Spleen (tissue), 13 donors: ENCODE measurements at regions of chr5 and their contacts with region 1.

Region 1: DNA sequence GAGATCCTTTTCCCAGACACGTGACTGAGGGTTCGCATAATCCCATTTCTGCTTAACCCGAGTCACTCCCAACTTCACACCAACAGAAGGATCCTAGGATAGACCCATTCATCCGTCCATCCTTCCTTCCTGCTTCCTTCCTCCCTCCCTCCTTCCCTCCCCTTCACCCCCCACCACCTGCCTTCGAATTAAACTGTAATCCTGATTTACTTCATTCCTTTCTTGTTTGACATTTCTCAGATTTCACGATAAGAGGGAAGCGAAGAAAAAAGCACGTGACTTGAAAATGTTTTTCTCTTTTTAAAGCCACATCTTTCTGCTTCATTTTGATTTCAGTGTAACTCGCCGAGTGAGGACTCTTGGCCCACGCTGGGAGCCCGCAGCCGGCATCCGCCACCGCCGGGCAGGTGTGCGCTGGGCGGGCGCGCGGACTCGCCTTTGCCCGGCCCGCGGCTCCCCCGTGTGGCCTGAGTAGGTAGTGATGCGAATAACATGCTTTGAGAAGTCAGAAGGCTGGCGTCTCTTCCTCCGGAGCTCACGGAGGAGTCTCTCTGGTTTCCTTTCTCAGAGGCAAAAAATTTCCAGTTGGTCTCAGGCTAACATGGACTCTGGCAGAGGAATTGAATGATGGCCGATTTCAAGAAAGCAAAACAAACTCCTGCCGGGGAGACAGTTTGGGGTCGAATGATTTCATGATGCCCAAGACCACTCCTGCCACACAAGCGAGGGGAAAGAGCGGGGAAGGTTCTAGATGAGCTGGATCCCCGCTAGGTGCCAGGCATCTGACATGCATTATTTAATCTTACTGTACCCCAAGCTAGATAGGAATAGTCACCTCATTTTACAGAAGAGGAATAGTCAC is 117.7 kb downstream of the SLC12A2 start:
- DNase-seq: peak; percentile 94
- H3K4me3 ChIP-seq: peak overlapping the region in 1 of 8 donors; percentile 50
- H3K27ac ChIP-seq: no peak overlapping the region
- H3K4me1 ChIP-seq: peaks cover 5 to 12% (median 8%) of the 10 kb centered on the region in 6 donors
- H3K27me3 ChIP-seq: peaks cover 0 to 4% (median 0%) of the 10 kb centered on the region in 7 donors
- CTCF ChIP-seq: peak; percentile 56 to 91 (median 82)
- POLR2A ChIP-seq: no peak

Region 2: GRCh38 chr5:127564002-127564769 is 637.1 kb before region 1 on chr5:
- intact Hi-C with region 1: loop called (anchors 5 kb)
- DNase-seq: no peak
- H3K4me3 ChIP-seq: no peak overlapping the region
- H3K27ac ChIP-seq: no peak overlapping the region
- H3K4me1 ChIP-seq: peaks cover 0 to 18% (median 0%) of the 10 kb centered on the region in 6 donors
- H3K27me3 ChIP-seq: peaks cover 0 to 4% (median 0%) of the 10 kb centered on the region in 7 donors
- CTCF ChIP-seq: peak; percentile 30 to 69 (median 61)
- POLR2A ChIP-seq: no peak

Region 3: GRCh38 chr5:127746756-127747155 is 454.5 kb before region 1 on chr5:
- intact Hi-C with region 1: loop called (anchors 10 kb)
- DNase-seq: no peak
- H3K4me3 ChIP-seq: no peak overlapping the region
- H3K27ac ChIP-seq: no peak overlapping the region
- H3K4me1 ChIP-seq: no peaks in the 10 kb centered on the region
- H3K27me3 ChIP-seq: no peaks in the 10 kb centered on the region
- CTCF ChIP-seq: peak in 6 of 11 experiments; percentile 12 to 30 (median 19)
- POLR2A ChIP-seq: no peak

Region 4: DNA sequence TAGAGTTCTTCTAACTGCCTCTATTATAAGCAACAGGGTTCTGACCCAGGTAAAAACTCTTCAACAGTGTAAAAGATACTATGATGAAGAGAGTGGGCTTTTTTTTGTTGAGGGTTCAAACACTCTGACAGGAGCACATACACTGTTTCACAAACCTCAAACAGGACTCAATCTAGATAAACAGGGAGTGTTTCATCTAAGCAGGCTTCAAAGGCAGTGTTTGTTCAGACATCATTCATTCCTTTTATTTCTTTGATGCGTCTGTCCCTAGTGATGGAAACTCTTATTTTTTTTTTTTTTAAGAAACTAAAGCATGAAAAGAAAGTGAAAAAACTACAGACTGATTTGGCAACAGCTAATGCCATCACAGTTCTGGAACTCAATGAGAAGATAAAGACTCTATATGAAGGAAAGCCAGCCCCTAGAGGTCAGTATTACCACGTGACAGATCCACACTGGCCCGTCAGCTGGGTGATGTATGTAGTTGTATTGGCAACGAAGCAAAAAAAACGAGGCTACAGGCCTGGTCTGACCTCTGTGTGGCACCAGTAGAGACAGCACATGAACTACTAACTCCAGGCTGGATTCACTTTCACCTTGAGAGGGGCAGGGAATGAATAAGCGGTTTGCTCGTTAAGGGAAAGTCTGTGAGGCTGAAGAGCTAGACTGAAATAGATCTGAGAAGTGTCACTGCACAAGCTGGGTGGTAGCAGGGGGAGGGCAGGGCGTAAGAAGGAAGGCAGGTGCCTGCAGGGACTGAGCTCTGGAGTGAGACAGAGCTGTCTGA is 325.9 kb before region 1 on chr5:
- intact Hi-C with region 1: loop called (anchors 10 kb)
- DNase-seq: no peak
- H3K4me3 ChIP-seq: no peak overlapping the region
- H3K27ac ChIP-seq: no peak overlapping the region
- H3K4me1 ChIP-seq: peaks cover 0 to 5% (median 0%) of the 10 kb centered on the region in 6 donors
- H3K27me3 ChIP-seq: no peaks in the 10 kb centered on the region
- CTCF ChIP-seq: peak in 6 of 11 experiments; percentile 9 to 22 (median 21)
- POLR2A ChIP-seq: no peak